ENCODE measurements at regions of chr2 and their contacts with region 1.

Region 1: GRCh38 chr2:111145103-111145760 is 24.5 kb downstream of the BCL2L11 start:
- DNase-seq: no peak
- ATAC-seq: no peak
- H3K4me3 ChIP-seq: no peak overlapping the region
- H3K27ac ChIP-seq: no peak overlapping the region
- H3K4me1 ChIP-seq: peaks cover 15 to 26% of the 10 kb centered on the region in 2 donors
- H3K27me3 ChIP-seq: no peaks in the 10 kb centered on the region
- CTCF ChIP-seq: no peak
- POLR2A ChIP-seq: no peak

Region 2: GRCh38 chr2:111160758-111161157 is 15.5 kb after region 1 on chr2:
- in situ Hi-C with region 1: no loop called
- intact Hi-C with region 1: loop called (anchors 2 kb)
- DNase-seq: no peak
- ATAC-seq: no peak
- H3K4me3 ChIP-seq: no peak overlapping the region
- H3K27ac ChIP-seq: peak overlapping the region in 1 of 4 donors; percentile 74
- H3K4me1 ChIP-seq: peaks cover 34 to 59% of the 10 kb centered on the region in 2 donors
- H3K27me3 ChIP-seq: no peaks in the 10 kb centered on the region
- CTCF ChIP-seq: no peak
- POLR2A ChIP-seq: no peak